Vagina (tissue), 2 donors: ENCODE measurements at regions of chr2 and their contacts with region 1.

Region 1: DNA sequence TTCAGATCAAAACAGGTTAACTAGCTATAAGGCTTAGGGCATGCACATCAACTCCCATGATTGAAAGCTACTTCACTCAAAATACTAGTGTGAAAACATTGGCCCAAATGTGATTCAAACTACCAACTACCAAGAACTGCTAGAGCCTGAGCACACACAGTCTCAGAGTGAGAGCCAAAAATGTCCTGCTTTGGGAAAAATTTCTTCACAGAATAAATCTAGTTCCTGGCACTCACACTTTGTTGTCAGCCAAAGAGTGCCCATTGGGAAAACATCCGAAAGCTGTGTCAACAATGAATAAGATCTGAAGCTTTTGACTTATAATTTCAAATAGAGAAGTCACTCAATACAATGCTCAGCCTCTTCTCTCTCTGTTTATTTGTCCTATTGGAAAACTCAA is 182.7 kb downstream of the LRATD1 start:
- DNase-seq: no peak
- H3K4me3 ChIP-seq: no peak overlapping the region
- H3K27ac ChIP-seq: no peak overlapping the region
- H3K4me1 ChIP-seq: no peaks in the 10 kb centered on the region
- H3K27me3 ChIP-seq: no peaks in the 10 kb centered on the region
- CTCF ChIP-seq: no peak
- POLR2A ChIP-seq: no peak

Region 2: GRCh38 chr2:14535190-14535589 is 280.0 kb before region 1 on chr2:
- intact Hi-C with region 1: no loop called
- DNase-seq: no peak
- H3K4me3 ChIP-seq: no peak overlapping the region
- H3K27ac ChIP-seq: no peak overlapping the region
- H3K4me1 ChIP-seq: no peaks in the 10 kb centered on the region
- H3K27me3 ChIP-seq: no peaks in the 10 kb centered on the region
- CTCF ChIP-seq: no peak
- POLR2A ChIP-seq: no peak

Region 3: DNA sequence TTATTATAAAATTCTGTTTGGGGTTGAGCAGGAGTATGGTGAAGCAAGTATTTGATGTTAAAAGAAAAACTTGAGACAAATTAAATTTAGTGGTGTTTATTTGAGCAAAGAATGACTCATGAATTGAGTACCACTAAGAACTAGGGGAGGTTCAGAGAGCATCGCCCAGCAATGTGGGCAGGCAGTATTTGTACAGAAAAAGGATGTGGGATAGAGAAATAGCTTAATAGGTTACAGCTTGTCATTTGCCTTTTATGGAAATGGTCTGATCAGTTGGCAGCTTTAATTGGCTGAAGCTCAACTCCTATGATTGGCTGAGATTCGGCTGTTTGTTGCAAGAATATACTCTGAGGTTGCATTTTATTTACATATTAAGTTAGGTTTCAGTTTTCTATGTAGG is 114.4 kb before region 1 on chr2:
- intact Hi-C with region 1: no loop called
- DNase-seq: no peak
- H3K4me3 ChIP-seq: no peak overlapping the region
- H3K27ac ChIP-seq: no peak overlapping the region
- H3K4me1 ChIP-seq: no peaks in the 10 kb centered on the region
- H3K27me3 ChIP-seq: no peaks in the 10 kb centered on the region
- CTCF ChIP-seq: no peak
- POLR2A ChIP-seq: no peak

Region 4: GRCh38 chr2:15614545-15615300 is 799.5 kb after region 1 on chr2:
- intact Hi-C with region 1: loop called (anchors 5 kb)
- DNase-seq: no peak
- H3K4me3 ChIP-seq: no peak overlapping the region
- H3K27ac ChIP-seq: no peak overlapping the region
- H3K4me1 ChIP-seq: no peaks in the 10 kb centered on the region
- H3K27me3 ChIP-seq: no peaks in the 10 kb centered on the region
- CTCF ChIP-seq: no peak
- POLR2A ChIP-seq: no peak